ENCODE measurements at regions of chr13 and their contacts with region 1.

Region 1: GRCh38 chr13:108961542-108962125 is 332.2 kb downstream of the MYO16 start:
- DNase-seq: peak; percentile 60
- H3K4me3 ChIP-seq: no peak overlapping the region
- H3K27ac ChIP-seq: no peak overlapping the region
- H3K4me1 ChIP-seq: peaks cover 8% of the 10 kb centered on the region
- H3K27me3 ChIP-seq: no peaks in the 10 kb centered on the region
- CTCF ChIP-seq: peak; percentile 49 to 67
- POLR2A ChIP-seq: no peak

Region 2: DNA sequence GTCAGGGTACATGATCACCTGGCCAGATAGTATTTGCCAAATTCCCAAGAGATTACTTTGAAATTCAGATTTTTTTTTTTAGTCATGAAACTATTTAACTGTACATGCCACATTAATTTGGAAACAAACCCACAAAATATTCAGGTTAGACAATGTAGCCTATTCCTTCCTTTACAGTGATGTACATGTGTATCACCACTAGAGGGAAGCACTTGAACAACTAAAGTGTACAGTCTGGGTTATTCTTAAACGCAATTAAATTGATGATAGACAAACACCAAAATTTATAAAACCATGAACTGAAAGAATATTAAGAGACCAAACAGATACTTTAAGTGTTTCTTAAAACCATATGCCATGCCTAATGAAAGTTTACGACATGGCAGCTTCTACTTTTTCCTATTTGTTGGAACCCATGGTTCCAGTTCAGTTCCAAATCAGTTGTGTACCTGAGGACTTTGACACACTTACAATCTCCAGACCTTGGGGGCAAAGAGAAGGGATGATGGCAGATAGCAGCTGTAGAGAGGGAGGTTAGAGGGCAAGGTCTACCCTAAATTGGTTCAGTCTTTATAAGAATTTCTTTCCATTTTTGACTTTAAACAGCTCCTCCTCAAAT is 639.3 kb before region 1 on chr13:
- CTCF ChIA-PET with region 1: no interaction called
- POLR2A ChIA-PET with region 1: no interaction called
- dilution Hi-C with region 1: no loop called
- intact Hi-C with region 1: loop called (anchors 10 kb)
- DNase-seq: peak; percentile 42
- H3K4me3 ChIP-seq: no peak overlapping the region
- H3K27ac ChIP-seq: no peak overlapping the region
- H3K4me1 ChIP-seq: no peaks in the 10 kb centered on the region
- H3K27me3 ChIP-seq: peaks cover 0 to 3% of the 10 kb centered on the region in 2 experiments
- CTCF ChIP-seq: peak; percentile 50 to 53
- POLR2A ChIP-seq: no peak

Region 3: DNA sequence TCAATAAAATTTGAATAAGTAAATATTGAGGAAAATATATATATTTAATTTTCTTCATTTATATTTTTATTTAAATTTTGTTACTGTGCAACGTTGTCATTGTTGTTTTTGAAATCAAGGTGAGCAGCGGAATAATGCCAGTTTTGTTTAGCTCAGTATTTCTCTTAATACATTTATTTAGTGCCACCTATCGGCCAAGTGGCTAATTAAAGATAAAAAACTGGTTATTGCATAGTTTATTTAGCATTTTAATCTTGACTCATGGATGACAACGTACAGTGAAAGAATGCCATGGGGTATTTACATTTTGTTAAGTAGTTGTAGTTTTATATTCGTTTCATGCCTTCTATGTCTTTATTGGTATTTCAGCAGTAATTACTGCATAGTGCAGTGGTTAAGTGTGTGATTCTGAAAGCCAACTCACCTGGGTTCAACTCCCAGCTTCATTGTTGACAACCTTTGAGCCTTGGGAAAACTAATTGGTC is 66.4 kb before region 1 on chr13:
- CTCF ChIA-PET with region 1: interaction called, 11 read pairs
- POLR2A ChIA-PET with region 1: no interaction called
- dilution Hi-C with region 1: no loop called
- intact Hi-C with region 1: no loop called
- DNase-seq: peak; percentile 47
- H3K4me3 ChIP-seq: no peak overlapping the region
- H3K27ac ChIP-seq: no peak overlapping the region
- H3K4me1 ChIP-seq: peaks cover 8% of the 10 kb centered on the region
- H3K27me3 ChIP-seq: peaks cover 0 to 4% of the 10 kb centered on the region in 2 experiments
- CTCF ChIP-seq: peak; percentile 23 to 28
- POLR2A ChIP-seq: no peak

Region 4: DNA sequence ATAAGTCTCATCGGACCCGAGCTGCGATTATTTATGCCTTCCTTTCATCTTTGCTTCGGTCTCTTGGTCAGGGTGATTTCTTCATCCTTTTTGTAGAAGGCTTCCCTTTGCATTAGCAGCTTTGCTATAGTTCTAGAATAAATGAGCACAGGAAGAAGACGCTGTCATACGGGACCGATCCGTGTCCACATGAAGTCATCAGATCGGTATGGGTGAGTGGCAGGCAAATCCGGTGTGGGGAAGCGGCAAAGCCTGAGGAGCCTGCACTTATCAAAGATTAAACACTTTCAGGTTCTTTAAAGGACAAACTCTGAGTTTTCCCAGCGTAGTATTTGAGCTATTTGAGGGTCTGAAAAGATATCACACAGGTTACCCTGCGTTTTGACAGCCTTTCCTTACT is 705.4 kb after region 1 on chr13:
- CTCF ChIA-PET with region 1: no interaction called
- POLR2A ChIA-PET with region 1: no interaction called
- dilution Hi-C with region 1: no loop called
- intact Hi-C with region 1: loop called (anchors 10 kb)
- DNase-seq: no peak
- H3K4me3 ChIP-seq: no peak overlapping the region
- H3K27ac ChIP-seq: no peak overlapping the region
- H3K4me1 ChIP-seq: no peaks in the 10 kb centered on the region
- H3K27me3 ChIP-seq: peaks cover 6 to 22% of the 10 kb centered on the region in 2 experiments
- CTCF ChIP-seq: no peak
- POLR2A ChIP-seq: no peak

Region 5: DNA sequence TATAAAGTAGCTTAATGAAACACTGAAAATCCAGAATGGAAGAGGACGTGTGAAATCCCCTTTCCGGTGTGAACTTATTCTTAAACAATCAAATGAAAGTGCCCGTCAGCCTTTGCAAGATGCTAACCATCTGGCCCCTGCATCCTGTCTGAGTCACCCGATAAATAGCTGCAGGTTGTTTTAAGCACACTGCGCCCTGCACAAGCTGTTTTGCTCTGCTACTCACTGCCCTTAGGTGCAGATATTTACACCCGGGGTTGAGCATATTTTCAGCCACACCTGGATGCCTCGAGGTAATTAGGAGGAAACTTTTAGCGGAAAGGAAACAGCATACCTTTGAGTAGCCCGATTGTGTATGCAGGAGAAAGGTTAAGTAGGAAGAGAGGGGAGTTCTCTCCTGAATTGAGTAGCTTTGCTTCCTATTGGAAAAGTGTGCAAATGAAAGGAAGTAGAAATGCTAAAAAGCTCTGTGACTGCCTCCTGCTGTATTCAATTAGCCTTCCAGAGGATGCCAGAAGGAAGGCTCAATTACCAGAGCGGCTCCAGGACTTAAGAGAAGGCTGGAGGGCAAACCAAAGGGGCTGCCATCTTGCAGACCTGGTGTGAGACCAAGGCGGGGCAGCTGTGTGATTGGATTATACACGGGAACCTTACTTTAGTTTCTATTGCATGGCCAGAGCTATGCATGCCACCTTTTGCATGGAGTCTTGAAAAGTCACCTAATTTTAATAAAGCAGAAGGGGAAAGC is 782.2 kb after region 1 on chr13:
- CTCF ChIA-PET with region 1: interaction called, 4 read pairs
- POLR2A ChIA-PET with region 1: no interaction called
- dilution Hi-C with region 1: no loop called
- intact Hi-C with region 1: loop called (anchors 5 kb)
- DNase-seq: peak; percentile 69
- H3K4me3 ChIP-seq: no peak overlapping the region
- H3K27ac ChIP-seq: no peak overlapping the region
- H3K4me1 ChIP-seq: no peaks in the 10 kb centered on the region
- H3K27me3 ChIP-seq: no peaks in the 10 kb centered on the region
- CTCF ChIP-seq: no peak
- POLR2A ChIP-seq: no peak

Region 6: DNA sequence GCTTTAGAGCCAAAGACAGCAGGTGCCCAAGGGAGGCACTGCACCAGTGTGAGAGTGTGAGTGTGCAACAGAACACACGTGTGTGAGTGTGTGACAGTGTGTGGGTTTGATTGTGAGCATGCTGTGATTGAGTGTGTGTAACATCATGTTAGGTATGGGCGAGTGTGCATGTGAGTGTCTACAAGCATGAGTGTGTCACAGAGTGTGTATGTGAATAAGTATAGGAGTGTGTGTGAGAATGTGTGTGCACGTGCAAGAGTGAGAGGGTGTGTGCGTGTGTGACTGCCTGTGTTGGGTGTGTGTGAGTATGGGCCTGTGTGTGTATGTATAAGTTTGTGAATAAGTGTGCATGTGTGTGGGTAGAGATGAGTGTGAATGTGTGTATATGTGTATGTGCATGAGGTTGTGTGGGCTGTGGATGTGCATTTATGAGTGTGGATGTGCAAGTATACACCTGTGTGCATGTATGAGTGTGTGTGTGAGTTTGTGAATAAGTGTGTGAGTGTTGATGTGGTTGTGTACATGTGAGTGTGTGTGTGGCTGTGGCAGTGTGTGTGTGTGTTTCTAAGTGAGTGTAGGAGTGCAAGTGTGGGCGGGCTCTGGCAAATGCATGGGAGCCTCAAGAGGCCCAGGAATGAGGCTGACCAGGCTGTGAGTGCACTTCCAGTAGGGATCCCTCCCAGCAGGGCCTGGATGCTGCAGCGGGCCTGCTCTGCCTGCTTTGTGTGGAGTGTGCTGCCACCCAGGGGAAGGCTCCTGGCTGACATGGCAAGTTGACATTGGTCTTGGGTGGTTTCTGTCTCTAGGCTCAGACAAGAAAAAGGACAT is 1146.9 kb after region 1 on chr13:
- CTCF ChIA-PET with region 1: interaction called, 23 read pairs
- POLR2A ChIA-PET with region 1: no interaction called
- dilution Hi-C with region 1: no loop called
- intact Hi-C with region 1: loop called (anchors 1 kb)
- DNase-seq: peak; percentile 46
- H3K4me3 ChIP-seq: no peak overlapping the region
- H3K27ac ChIP-seq: no peak overlapping the region
- H3K4me1 ChIP-seq: no peaks in the 10 kb centered on the region
- H3K27me3 ChIP-seq: peaks cover 0 to 3% of the 10 kb centered on the region in 2 experiments
- CTCF ChIP-seq: peak; percentile 25 to 68
- POLR2A ChIP-seq: no peak

Region 7: DNA sequence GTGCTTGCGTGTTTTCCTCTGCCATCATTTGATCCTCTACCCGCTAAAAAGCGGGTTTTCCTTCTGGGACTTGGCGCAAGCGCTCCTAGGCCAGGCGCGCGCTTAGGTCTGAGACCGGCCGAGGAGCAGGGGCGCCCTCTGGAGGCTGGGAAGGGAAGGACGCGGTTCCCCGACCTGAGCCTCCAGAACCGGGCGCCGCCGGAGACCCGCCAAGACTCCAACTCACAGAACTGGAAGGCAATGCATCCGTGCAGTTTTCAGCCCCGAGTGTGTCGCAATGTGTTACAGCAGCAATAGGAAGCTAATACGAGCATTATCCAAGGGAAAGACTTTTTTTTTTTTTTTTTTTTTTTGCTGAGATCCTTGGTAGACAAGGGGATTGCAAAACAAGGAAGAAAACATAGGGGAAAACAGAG is 1154.4 kb after region 1 on chr13:
- CTCF ChIA-PET with region 1: interaction called, 22 read pairs
- POLR2A ChIA-PET with region 1: no interaction called
- dilution Hi-C with region 1: no loop called
- intact Hi-C with region 1: loop called (anchors 1 kb)
- DNase-seq: peak; percentile 59
- H3K4me3 ChIP-seq: no peak overlapping the region
- H3K27ac ChIP-seq: no peak overlapping the region
- H3K4me1 ChIP-seq: no peaks in the 10 kb centered on the region
- H3K27me3 ChIP-seq: peaks cover 17 to 22% of the 10 kb centered on the region in 2 experiments
- CTCF ChIP-seq: peak; percentile 92 to 97
- POLR2A ChIP-seq: no peak